Activated CD4-positive, alpha-beta T cell treated with anti-CD3 and anti-CD28 coated beads, Interleukin-2, amount 10 ng/mL, durations not matched to agents 24 days and 14 days (primary cell): ENCODE measurements at regions of chr3 and their contacts with region 1.

Region 1: GRCh38 chr3:172138795-172139441 is 99.5 kb downstream of the FNDC3B start:
- DNase-seq: peak; percentile 74
- H3K4me3 Mint-ChIP-seq: peak overlapping the region; percentile 26
- H3K27ac Mint-ChIP-seq: peak overlapping the region; percentile 67
- H3K4me1 Mint-ChIP-seq: peaks cover 47% of the 10 kb centered on the region
- H3K27me3 Mint-ChIP-seq: no peaks in the 10 kb centered on the region

Region 2: GRCh38 chr3:171950373-171950772 is 188.5 kb before region 1 on chr3:
- intact Hi-C with region 1: no loop called
- DNase-seq: no peak
- H3K4me3 Mint-ChIP-seq: no peak overlapping the region
- H3K27ac Mint-ChIP-seq: no peak overlapping the region
- H3K4me1 Mint-ChIP-seq: peaks cover 2% of the 10 kb centered on the region
- H3K27me3 Mint-ChIP-seq: peaks cover 25% of the 10 kb centered on the region

Region 3: GRCh38 chr3:172039436-172040077 is 99.4 kb before region 1 on chr3 and contains the start of gene FNDC3B:
- intact Hi-C with region 1: loop called (anchors 5 kb)
- DNase-seq: peak; percentile 98
- H3K4me3 Mint-ChIP-seq: peak within 1 kb of the TSS; percentile 87
- H3K27ac Mint-ChIP-seq: peak within 1 kb of the TSS; percentile 95
- H3K4me1 Mint-ChIP-seq: peaks cover 17% of the 10 kb centered on the region
- H3K27me3 Mint-ChIP-seq: peaks cover 3% of the 10 kb centered on the region
- total RNA-seq, gene FNDC3B: 19.6 and 19.9 TPM in 2 replicates